OCI-LY7 (cell line): ENCODE measurements at regions of chr2 and their contacts with region 1.

Region 1: DNA sequence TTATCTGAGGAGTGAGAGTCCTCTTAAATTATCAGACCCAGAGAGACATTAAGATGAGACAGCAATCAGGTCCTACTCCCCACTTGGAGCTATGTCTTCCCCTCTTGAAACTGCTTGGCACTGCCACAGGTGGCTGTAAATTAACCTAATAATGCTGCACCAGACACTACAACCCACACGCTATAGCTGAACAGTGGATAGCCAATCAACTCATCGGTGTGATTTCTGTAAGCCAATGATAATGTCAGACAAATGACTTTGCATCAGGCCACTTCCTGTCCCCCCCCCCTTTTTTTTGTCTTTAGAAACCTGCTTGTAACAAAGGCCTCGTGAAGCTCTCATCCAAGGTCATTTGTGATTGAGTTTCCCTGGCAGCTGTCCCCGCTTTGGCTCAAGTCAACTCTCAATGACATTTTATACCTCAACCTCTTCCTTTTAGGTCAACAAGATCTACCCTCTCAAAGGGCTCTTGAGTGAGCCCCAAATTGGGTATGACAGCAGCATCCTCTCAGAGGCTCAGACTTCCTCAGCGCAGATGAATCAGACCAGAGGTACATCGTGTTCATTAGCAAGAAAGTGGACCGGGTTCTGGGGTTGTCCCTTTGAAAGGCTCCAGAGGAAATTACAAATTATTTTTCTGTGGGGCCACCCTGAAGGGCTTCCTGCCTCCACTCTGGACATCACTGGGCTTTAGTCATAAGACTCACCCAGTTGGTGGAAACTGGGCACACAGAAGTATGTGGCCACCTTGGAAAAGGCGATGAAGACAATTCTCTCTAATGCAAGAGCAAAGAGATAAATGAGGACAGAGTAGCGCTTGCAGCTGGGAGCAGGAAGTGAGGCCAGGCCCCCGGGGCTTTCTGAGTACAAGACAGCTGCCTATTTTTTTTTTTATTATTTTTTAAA is 73.6 kb downstream of the COPS8 start:
- DNase-seq: peak; percentile 41
- H3K4me3 ChIP-seq: peak overlapping the region; percentile 6
- H3K27ac ChIP-seq: peak overlapping the region; percentile 40
- H3K4me1 ChIP-seq: peaks cover 77% of the 10 kb centered on the region
- CTCF ChIP-seq: no peak

Region 2: GRCh38 chr2:237171396-237171795 is 12.1 kb after region 1 on chr2:
- CTCF ChIA-PET with region 1: no interaction called
- POLR2A ChIA-PET with region 1: no interaction called
- intact Hi-C with region 1: no loop called
- DNase-seq: no peak
- H3K4me3 ChIP-seq: no peak overlapping the region
- H3K27ac ChIP-seq: no peak overlapping the region
- H3K4me1 ChIP-seq: no peaks in the 10 kb centered on the region
- CTCF ChIP-seq: no peak

Region 3: GRCh38 chr2:237198164-237198855 is 39.1 kb after region 1 on chr2:
- CTCF ChIA-PET with region 1: no interaction called
- POLR2A ChIA-PET with region 1: interaction called, 6 read pairs
- intact Hi-C with region 1: loop called (anchors 2 kb)
- DNase-seq: no peak
- H3K4me3 ChIP-seq: no peak overlapping the region
- H3K27ac ChIP-seq: no peak overlapping the region
- H3K4me1 ChIP-seq: peaks cover 14% of the 10 kb centered on the region
- CTCF ChIP-seq: no peak